HCT116 (cell line): ENCODE measurements at regions of chr15 and their contacts with region 1.

Region 1: DNA sequence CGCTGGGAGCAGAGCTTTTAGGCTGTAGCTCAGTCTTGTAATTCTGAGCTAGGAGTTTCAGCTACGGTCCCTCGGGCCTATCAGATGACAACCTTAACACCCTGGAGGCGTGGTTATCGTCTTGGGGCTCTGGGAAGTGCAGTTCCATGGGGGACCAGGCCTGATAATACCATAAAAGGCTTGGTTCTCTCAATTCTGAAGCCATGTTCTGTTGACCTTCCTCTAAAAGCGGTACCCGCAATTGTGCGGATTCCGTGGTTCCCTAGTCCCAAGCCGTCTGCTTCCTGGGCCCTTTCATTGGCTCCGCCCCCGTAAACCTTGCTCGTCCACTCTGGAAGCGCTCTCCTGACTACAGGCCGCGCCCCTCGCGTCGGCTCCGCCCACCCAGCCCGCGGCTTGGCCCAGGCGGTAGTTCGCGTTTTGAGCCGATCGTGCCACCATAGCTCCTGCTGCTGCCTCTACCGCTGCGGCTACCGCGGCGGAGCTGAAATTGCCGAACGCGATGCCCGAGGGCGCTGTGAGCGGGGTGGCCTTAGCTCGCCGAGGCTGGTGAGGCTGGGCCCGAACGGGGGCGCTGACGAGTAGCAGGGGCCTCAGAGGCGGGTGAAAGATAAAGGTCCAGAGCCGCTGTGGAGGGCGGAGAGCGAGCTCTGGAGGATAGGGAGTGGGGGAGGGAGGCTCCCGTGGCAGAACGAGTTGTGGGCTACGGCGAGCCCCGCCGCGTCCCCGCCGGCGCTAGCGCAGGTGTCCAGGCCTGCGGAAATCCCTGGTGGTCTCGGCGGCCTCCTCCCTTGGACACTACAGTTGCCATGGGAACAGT is at the start of gene MAPKBP1:
- DNase-seq: peak; percentile 95
- ATAC-seq: peak; percentile 93
- H3K4me3 ChIP-seq: peak within 1 kb of the TSS; percentile 79 to 80
- H3K27ac ChIP-seq: peak within 1 kb of the TSS; percentile 73
- H3K4me1 ChIP-seq: peaks cover 14 to 31% of the 10 kb centered on the region in 2 experiments
- H3K27me3 ChIP-seq: no peaks in the 10 kb centered on the region
- CTCF ChIP-seq: peak; percentile 60 to 98 (median 71)
- POLR2A ChIP-seq: peak; percentile 42
- RAD21 ChIP-seq: peak; percentile 75
- total RNA-seq, gene MAPKBP1: 21.3 TPM

Region 2: DNA sequence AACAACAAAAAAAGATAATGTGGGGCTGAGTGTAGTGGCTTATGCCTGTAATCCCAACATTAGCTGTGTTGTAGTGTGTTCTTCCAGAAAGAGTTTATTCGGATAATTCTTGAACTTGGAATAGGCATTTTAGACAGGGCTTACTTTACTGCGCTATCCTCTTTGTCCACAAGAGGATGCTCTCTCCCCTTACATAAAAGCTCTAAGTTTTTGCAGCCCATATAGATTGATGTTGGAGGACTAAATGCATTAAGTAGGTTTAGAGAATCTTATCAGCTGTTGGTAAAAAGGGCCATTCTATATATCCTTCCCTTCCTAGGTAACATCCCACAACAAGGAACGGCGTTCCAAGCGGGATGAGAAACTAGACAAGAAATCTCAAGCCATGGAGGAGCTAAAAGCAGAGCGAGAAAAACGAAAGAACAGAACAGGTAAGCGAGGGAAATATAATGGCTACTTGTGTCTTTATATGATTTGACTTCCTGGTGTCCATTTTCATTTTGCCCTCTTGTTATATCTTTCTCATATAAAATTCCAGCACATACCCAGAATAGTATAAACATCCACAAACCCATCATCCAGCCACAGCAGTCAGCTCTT is 308.4 kb before region 1 on chr15:
- CTCF ChIA-PET with region 1: interaction called, 15 read pairs
- POLR2A ChIA-PET with region 1: no interaction called
- RAD21 ChIA-PET with region 1: interaction called in 1 of 2 experiments, 3 read pairs
- intact Hi-C with region 1: loop called (anchors 2 kb)
- DNase-seq: peak; percentile 45
- ATAC-seq: peak; percentile 80
- H3K4me3 ChIP-seq: no peak overlapping the region
- H3K27ac ChIP-seq: no peak overlapping the region
- H3K4me1 ChIP-seq: no peaks in the 10 kb centered on the region
- H3K27me3 ChIP-seq: no peaks in the 10 kb centered on the region
- CTCF ChIP-seq: peak; percentile 84 to 99 (median 98)
- POLR2A ChIP-seq: no peak
- RAD21 ChIP-seq: peak; percentile 90

Region 3: GRCh38 chr15:41756198-41756597 is 18.1 kb before region 1 on chr15:
- CTCF ChIA-PET with region 1: interaction called, 10 read pairs
- POLR2A ChIA-PET with region 1: no interaction called
- RAD21 ChIA-PET with region 1: no interaction called
- intact Hi-C with region 1: no loop called
- DNase-seq: no peak
- ATAC-seq: no peak
- H3K4me3 ChIP-seq: no peak overlapping the region
- H3K27ac ChIP-seq: no peak overlapping the region
- H3K4me1 ChIP-seq: no peaks in the 10 kb centered on the region
- H3K27me3 ChIP-seq: no peaks in the 10 kb centered on the region
- CTCF ChIP-seq: no peak
- POLR2A ChIP-seq: no peak
- RAD21 ChIP-seq: no peak

Region 4: DNA sequence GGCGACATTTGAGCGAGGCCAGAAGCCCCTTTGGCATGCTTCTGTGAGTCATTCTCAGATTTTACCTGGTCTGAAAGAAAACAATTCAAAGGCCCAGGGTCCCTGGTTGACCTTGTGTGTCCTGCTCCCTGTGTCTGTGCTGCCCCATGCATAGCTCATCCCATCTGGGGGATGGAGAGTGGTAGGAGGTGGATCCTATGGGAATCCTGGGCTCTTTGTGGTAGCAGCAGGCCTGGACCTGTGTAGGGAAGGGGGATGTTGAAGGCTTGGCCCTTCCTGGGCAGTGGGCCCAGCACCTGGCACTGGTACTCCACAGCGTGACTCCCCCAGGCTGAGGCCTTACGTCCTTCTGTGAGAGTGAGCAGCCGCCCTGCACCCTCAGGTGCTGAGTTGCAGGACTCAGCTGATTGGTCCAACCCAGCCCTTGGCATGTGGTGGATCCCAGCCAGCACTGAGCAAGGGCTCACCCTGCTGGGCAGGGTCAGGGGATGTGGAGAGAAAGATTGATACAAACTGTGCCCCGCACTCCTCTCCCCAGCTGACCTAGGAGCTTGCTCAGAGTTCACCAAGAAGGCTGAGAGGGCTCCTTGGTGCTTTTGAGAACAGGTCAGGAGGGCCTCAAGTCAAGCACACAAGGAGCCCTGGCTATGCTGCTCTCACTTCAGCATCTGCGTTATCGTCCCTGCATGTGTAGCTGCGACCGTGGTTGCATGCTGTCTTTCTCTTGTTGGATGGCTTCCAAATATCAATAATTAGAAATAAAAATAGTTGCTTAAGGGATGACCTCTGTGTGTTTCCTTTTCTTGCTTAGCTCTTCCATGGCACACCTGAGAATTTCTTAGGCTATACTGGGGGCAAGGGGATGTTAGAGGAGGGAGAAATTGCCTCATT is 32.3 kb after region 1 on chr15:
- CTCF ChIA-PET with region 1: interaction called, 125 read pairs
- POLR2A ChIA-PET with region 1: interaction called, 12 read pairs
- RAD21 ChIA-PET with region 1: interaction called, 13 to 15 read pairs
- intact Hi-C with region 1: loop called (anchors 1 kb)
- DNase-seq: peak; percentile 24
- ATAC-seq: peak; percentile 85
- H3K4me3 ChIP-seq: no peak overlapping the region
- H3K27ac ChIP-seq: no peak overlapping the region
- H3K4me1 ChIP-seq: peaks cover 12 to 21% of the 10 kb centered on the region in 2 experiments; a peak in 3 of 4 replicates
- H3K27me3 ChIP-seq: no peaks in the 10 kb centered on the region
- CTCF ChIP-seq: peak; percentile 24 to 57 (median 32); a peak in 4 of 6 replicates
- POLR2A ChIP-seq: no peak
- RAD21 ChIP-seq: peak; percentile 76

Region 5: DNA sequence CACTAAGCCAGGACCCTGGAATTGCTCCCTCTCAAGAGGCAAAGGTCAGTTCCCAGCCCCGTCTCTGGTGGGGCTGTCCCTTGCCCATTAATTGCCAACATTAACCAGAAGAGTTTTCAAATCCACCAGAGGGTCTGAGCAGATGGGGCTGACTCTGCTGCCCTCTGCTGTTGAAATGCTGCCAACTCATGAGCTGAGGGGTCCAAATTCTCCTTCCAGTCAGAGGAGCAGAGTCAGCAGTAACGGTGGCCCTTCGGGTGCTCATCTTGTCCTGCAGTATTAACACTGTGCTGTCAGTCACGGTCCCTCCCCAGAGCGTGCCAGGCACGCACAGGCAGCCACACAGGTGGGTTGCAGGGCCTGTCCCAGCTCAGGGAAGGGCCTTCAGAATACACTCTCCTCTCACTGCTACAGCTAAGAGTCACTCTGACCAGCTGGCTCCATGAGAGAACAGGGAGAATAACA is 130.3 kb after region 1 on chr15:
- CTCF ChIA-PET with region 1: interaction called, 52 read pairs
- POLR2A ChIA-PET with region 1: interaction called, 4 read pairs
- RAD21 ChIA-PET with region 1: interaction called, 5 to 16 read pairs
- intact Hi-C with region 1: loop called (anchors 2 kb)
- DNase-seq: peak; percentile 34
- ATAC-seq: peak; percentile 91
- H3K4me3 ChIP-seq: no peak overlapping the region
- H3K27ac ChIP-seq: no peak overlapping the region
- H3K4me1 ChIP-seq: no peaks in the 10 kb centered on the region
- H3K27me3 ChIP-seq: no peaks in the 10 kb centered on the region
- CTCF ChIP-seq: peak; percentile 68 to 92 (median 86)
- POLR2A ChIP-seq: no peak
- RAD21 ChIP-seq: peak; percentile 89

Region 6: DNA sequence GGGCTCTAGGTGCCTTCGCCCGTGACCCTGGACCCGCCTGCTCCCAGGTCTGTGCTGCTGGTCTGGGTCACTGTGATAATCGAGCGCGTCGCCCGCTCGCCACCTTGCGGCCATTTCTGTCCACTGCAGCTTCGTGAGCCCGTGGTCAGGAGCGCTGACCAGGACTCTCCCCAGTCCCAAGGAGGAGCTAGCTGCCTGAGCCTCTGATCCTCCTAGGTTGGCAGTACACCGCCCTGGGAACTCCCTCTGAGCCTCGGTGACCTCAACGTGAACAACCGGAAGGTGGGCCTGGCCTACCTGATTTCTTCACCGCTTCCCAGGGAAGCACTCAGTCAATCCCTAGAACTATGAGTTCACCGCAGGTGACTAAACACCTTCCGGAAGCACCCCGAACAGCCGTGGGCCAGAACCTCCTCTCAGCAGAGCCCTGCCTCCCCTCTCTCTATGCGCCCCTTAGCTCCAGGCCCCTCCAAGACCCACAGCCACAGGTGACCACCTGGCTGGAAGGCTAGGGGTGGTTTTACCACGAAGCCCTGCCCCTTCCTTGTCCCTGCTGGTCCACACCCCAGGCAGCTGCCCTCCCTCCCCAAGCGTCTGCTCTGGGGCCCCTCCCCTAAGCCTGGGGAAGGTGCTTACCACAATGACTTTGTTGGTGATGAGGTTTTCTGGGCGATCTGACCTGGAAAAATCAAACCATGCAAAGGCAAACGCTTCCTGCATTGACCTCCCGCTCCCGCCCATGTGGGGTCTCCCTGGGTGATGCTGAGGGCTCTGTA is 310.4 kb after region 1 on chr15:
- CTCF ChIA-PET with region 1: interaction called, 12 read pairs
- POLR2A ChIA-PET with region 1: no interaction called
- RAD21 ChIA-PET with region 1: no interaction called
- intact Hi-C with region 1: no loop called
- DNase-seq: no peak
- ATAC-seq: peak; percentile 96
- H3K4me3 ChIP-seq: no peak overlapping the region
- H3K27ac ChIP-seq: no peak overlapping the region
- H3K4me1 ChIP-seq: peaks cover 0 to 10% of the 10 kb centered on the region in 2 experiments; a peak in 1 of 4 replicates
- H3K27me3 ChIP-seq: no peaks in the 10 kb centered on the region
- CTCF ChIP-seq: peak; percentile 74 to 90 (median 86)
- POLR2A ChIP-seq: no peak
- RAD21 ChIP-seq: peak; percentile 82

Region 7: GRCh38 chr15:42528970-42529369 is 754.7 kb after region 1 on chr15:
- CTCF ChIA-PET with region 1: no interaction called
- POLR2A ChIA-PET with region 1: no interaction called
- RAD21 ChIA-PET with region 1: no interaction called
- intact Hi-C with region 1: no loop called
- DNase-seq: no peak
- ATAC-seq: no peak
- H3K4me3 ChIP-seq: no peak overlapping the region
- H3K27ac ChIP-seq: no peak overlapping the region
- H3K4me1 ChIP-seq: no peaks in the 10 kb centered on the region
- H3K27me3 ChIP-seq: no peaks in the 10 kb centered on the region
- CTCF ChIP-seq: no peak
- POLR2A ChIP-seq: no peak
- RAD21 ChIP-seq: no peak